CD14-positive monocyte (primary cell): ENCODE measurements at regions of chr20 and their contacts with region 1.

Region 1: GRCh38 chr20:63739130-63740069 is at the start of gene SLC2A4RG:
- DNase-seq: peak; percentile 62 to 71 (median 71)
- H3K4me3 ChIP-seq: peak within 1 kb of the TSS; percentile 58 to 83 (median 59)
- H3K4me3 Mint-ChIP-seq: peak within 1 kb of the TSS; percentile 62 to 71
- H3K27ac ChIP-seq: peak within 1 kb of the TSS; percentile 26 to 36
- H3K27ac Mint-ChIP-seq: peak within 1 kb of the TSS in 1 of 7 donors; percentile 36
- H3K4me1 ChIP-seq: peaks cover 35 to 47% of the 10 kb centered on the region in 2 donors
- H3K4me1 Mint-ChIP-seq: peaks cover 21% of the 10 kb centered on the region
- H3K27me3 ChIP-seq: peaks cover 8 to 26% of the 10 kb centered on the region in 2 donors
- H3K27me3 Mint-ChIP-seq: peaks cover 17 to 37% (median 25%) of the 10 kb centered on the region in 3 donors
- CTCF ChIP-seq: no peak
- polyA plus RNA-seq, gene SLC2A4RG: 0.46 to 21.0 (median 1.5) TPM

Region 2: GRCh38 chr20:63574156-63574828 is 165.1 kb before region 1 on chr20 and contains the start of gene HELZ2:
- intact Hi-C with region 1: loop called in 1 of 2 experiments (anchors 5 kb)
- DNase-seq: peak; percentile 63 to 77 (median 69)
- H3K4me3 ChIP-seq: peak within 1 kb of the TSS; percentile 76 to 93 (median 92)
- H3K4me3 Mint-ChIP-seq: peak within 1 kb of the TSS; percentile 88 to 92
- H3K27ac ChIP-seq: peak within 1 kb of the TSS; percentile 31 to 80
- H3K27ac Mint-ChIP-seq: peak within 1 kb of the TSS; percentile 85 to 94 (median 87)
- H3K4me1 ChIP-seq: peaks cover 26 to 38% of the 10 kb centered on the region in 2 donors
- H3K4me1 Mint-ChIP-seq: peaks cover 17% of the 10 kb centered on the region
- H3K27me3 ChIP-seq: peaks cover 0 to 59% of the 10 kb centered on the region in 2 donors
- H3K27me3 Mint-ChIP-seq: peaks cover 35 to 79% (median 48%) of the 10 kb centered on the region in 3 donors
- CTCF ChIP-seq: no peak
- polyA plus RNA-seq, gene HELZ2: 3.0 to 15.5 (median 3.3) TPM

Region 3: DNA sequence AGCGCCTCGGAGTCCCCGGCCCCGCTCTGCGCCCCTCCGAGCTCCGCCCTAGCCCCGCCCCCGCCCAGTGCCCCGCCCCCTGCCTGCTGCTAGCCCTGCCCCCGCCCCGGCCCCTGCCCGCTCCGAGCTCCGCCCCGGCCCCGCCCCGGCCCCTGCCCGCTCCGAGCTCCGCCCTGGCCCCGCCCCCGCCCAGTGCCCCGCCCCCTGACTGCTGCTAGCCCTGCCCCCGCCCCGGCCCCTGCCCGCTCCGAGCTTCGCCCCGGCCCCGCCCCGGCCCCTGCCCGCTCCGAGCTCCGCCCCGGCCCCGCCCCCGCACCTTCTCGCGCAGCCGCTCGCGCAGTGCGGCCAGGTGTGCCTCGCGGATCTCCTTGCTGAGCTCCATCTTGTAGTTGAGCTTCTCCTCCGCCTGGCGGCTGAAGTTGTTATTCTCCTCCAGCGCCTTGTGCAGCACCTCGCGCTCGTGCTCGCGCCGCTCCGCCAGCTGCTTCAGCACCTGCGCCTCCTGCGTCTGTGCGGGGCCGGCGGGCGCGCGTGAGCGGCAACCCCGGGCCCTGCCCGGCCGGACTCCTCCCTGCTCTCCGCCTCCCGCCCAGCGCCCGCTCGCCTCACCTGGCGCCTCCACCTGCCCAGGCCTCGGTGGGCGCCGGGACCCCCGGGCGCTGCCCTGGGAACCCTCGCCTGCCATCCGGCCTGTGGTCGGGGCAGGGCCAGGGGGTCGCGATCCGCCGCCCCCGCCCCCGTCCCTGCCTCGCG is 97.4 kb before region 1 on chr20:
- intact Hi-C with region 1: loop called in 1 of 2 experiments (anchors 5 kb)
- DNase-seq: peak; percentile 70 to 90 (median 76)
- H3K4me3 ChIP-seq: peak overlapping the region; percentile 74 to 93 (median 82)
- H3K4me3 Mint-ChIP-seq: peak overlapping the region; percentile 72 to 79
- H3K27ac ChIP-seq: peak overlapping the region; percentile 81 to 86
- H3K27ac Mint-ChIP-seq: peak overlapping the region in 5 of 7 donors; percentile 33 to 79 (median 63)
- H3K4me1 ChIP-seq: peaks cover 33 to 40% of the 10 kb centered on the region in 2 donors
- H3K4me1 Mint-ChIP-seq: peaks cover 33% of the 10 kb centered on the region
- H3K27me3 ChIP-seq: no peaks in the 10 kb centered on the region
- H3K27me3 Mint-ChIP-seq: peaks cover 6 to 18% (median 7%) of the 10 kb centered on the region in 3 donors
- CTCF ChIP-seq: peak; percentile 52

Region 4: DNA sequence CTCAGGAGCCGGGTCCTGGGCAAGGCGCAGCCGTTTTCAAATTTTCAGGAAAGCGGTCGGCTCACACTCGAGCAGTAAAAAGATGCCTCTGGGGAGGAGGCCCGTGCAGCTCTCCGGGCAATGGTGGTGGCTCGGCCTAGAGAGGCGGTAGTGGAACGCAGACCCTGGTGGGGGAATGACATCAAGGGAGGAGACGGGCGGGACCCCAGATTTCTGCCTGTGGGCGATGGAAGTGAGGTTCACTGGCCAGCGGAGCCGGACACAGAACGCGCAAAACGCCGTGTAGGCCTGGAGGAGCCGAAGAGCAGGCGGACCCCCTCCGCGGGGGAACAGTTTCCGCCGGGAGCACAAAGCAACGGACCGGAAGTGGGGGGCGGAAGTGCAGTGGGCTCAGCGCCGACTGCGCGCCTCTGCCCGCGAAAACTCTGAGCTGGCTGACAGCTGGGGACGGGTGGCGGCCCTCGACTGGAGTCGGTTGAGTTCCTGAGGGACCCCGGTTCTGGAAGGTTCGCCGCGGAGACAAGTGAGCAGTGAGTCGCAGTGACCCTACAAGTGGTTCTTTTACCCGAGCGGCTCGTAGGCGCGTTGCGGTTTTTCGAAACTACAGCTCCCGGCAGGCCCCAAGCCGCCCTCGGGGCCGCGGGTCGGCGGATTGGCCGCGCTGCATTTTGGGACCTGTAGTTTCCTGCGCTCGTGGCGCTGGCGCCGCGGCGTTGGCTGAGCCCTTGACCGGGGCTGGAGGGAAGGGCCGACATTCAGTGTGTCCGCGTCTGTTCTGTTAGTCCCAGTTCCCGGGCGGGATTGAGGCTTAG is 81.3 kb before region 1 on chr20 and contains the start of gene RTEL1:
- intact Hi-C with region 1: loop called in 1 of 2 experiments (anchors 5 kb)
- DNase-seq: peak; percentile 87 to 90 (median 90)
- H3K4me3 ChIP-seq: peak within 1 kb of the TSS; percentile 70 to 96 (median 93)
- H3K4me3 Mint-ChIP-seq: peak within 1 kb of the TSS; percentile 95 to 96
- H3K27ac ChIP-seq: peak within 1 kb of the TSS; percentile 55 to 81
- H3K27ac Mint-ChIP-seq: peak within 1 kb of the TSS; percentile 90 to 98 (median 95)
- H3K4me1 ChIP-seq: peaks cover 27 to 32% of the 10 kb centered on the region in 2 donors
- H3K4me1 Mint-ChIP-seq: peaks cover 35% of the 10 kb centered on the region
- H3K27me3 ChIP-seq: peaks cover 0 to 14% of the 10 kb centered on the region in 2 donors
- H3K27me3 Mint-ChIP-seq: peaks cover 5 to 15% (median 12%) of the 10 kb centered on the region in 3 donors
- CTCF ChIP-seq: no peak
- polyA plus RNA-seq, gene RTEL1: 1.0 to 15.5 (median 4.8) TPM

Region 5: GRCh38 chr20:63673951-63674350 is 65.4 kb before region 1 on chr20:
- intact Hi-C with region 1: no loop called
- DNase-seq: no peak
- H3K4me3 ChIP-seq: no peak overlapping the region
- H3K4me3 Mint-ChIP-seq: no peak overlapping the region
- H3K27ac ChIP-seq: no peak overlapping the region
- H3K27ac Mint-ChIP-seq: no peak overlapping the region
- H3K4me1 ChIP-seq: no peaks in the 10 kb centered on the region
- H3K4me1 Mint-ChIP-seq: no peaks in the 10 kb centered on the region
- H3K27me3 ChIP-seq: no peaks in the 10 kb centered on the region
- H3K27me3 Mint-ChIP-seq: peaks cover 0 to 2% (median 0%) of the 10 kb centered on the region in 3 donors
- CTCF ChIP-seq: no peak

Region 6: DNA sequence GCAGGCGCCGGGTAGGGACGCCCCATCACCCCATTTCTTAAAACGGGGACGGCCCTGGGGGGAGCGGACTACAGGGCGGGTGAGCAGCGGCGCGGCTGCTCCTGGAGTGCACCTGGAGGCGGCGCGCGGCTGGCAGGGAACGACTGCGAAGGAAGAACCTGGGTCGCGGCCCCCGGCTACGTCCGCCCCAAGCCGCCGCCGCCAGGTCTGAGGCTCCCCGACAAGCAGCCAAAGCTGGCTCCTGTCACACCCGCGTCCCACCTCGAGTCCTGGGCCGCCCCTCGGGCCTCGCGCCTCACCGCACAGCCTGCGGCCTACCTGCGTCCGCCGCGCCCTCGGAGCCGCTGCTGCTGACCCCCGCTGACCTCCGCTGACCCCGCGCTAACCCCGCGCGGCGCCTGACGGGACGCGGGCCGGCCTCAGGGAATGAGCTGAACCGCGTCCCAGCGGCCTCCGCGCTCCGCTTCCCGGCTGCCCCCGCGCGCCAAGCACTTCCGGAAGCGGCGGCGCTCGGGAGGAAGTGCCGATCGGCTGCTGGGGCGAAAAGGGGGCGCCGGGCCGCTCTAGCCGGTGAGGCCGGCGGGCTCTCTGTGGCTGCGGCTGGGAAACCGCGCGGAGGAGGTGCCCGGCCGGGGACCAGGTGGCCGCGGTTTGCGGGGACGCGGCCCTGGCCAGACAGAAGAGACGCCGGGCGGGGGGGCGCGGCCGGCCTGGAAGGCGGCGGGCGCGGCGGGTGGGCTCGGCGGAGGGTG is 31.7 kb before region 1 on chr20 and contains the starts of genes ARFRP1 and ZGPAT:
- intact Hi-C with region 1: loop called in 1 of 2 experiments (anchors 2 kb)
- DNase-seq: peak; percentile 83 to 87 (median 86)
- H3K4me3 ChIP-seq: peak within 1 kb of the TSS; percentile 35 to 86 (median 71)
- H3K4me3 Mint-ChIP-seq: peak within 1 kb of the TSS; percentile 82 to 88
- H3K27ac ChIP-seq: peak within 1 kb of the TSS; percentile 41 to 81
- H3K27ac Mint-ChIP-seq: peak within 1 kb of the TSS; percentile 71 to 89 (median 82)
- H3K4me1 ChIP-seq: peaks cover 23 to 30% of the 10 kb centered on the region in 2 donors
- H3K4me1 Mint-ChIP-seq: peaks cover 34% of the 10 kb centered on the region
- H3K27me3 ChIP-seq: no peaks in the 10 kb centered on the region
- H3K27me3 Mint-ChIP-seq: peaks cover 0 to 3% (median 0%) of the 10 kb centered on the region in 3 donors
- CTCF ChIP-seq: no peak
- polyA plus RNA-seq, gene ARFRP1: 18.2 to 31.1 (median 20.7) TPM
- polyA plus RNA-seq, gene ZGPAT: 24.2 to 58.6 (median 28.3) TPM